Ovary (tissue), 10 donors: ENCODE measurements at regions of chr11 and their contacts with region 1.

Region 1: DNA sequence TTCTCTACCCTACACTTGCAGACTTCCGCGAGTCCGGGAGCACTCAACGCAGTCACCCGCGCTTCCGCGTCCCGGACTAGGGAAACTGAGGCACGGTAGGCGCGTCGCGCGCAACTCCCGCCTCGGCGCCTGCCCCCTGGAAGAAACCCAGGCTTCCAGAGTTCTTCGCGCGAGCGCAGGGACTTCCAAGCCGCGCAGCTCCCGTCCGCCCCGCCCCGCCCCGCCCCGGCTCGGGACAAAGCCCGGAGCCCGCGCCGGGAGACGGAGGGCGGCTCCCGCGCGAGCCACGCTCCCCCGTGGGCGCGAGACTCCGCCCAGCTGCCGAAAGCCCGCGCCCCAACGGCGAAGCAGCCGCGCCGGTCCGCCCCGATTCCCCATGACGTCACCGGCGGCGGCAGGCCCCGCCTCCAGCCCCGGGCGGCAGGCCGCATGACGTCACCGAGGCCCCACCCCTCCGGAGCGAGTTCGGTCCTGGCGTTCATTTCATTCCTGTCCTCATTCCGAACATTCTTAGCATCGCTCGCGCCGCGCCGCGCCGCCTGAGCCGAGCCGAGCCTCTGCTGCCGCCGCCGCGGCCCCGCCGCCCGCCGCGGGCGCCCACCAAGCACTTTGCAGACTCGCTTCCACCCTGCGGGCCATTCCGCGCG is at the start of gene TEAD1:
- DNase-seq: peak; percentile 97 to 100 (median 99)
- H3K4me3 ChIP-seq: peak within 1 kb of the TSS; percentile 52
- H3K27ac ChIP-seq: peak within 1 kb of the TSS; percentile 94 to 99
- H3K4me1 ChIP-seq: peaks cover 2% of the 10 kb centered on the region
- H3K27me3 ChIP-seq: no peaks in the 10 kb centered on the region
- CTCF ChIP-seq: peak in 2 of 3 donors; percentile 25 to 39
- EP300 ChIP-seq: no peak
- POLR2A ChIP-seq: peak; percentile 67
- total RNA-seq, gene TEAD1: 59.2 to 84.1 (median 73.9) TPM

Region 2: GRCh38 chr11:12319988-12320387 is 354.1 kb before region 1 on chr11:
- intact Hi-C with region 1: loop called in 1 of 4 experiments (anchors 10 kb)
- DNase-seq: no peak
- H3K4me3 ChIP-seq: no peak overlapping the region
- H3K27ac ChIP-seq: no peak overlapping the region
- H3K4me1 ChIP-seq: peaks cover 4% of the 10 kb centered on the region
- H3K27me3 ChIP-seq: peaks cover 2% of the 10 kb centered on the region
- CTCF ChIP-seq: no peak
- EP300 ChIP-seq: no peak
- POLR2A ChIP-seq: no peak

Region 3: GRCh38 chr11:12411806-12412727 is 262.0 kb before region 1 on chr11:
- intact Hi-C with region 1: loop called in 1 of 4 experiments (anchors 10 kb)
- DNase-seq: peak; percentile 70 to 80 (median 71)
- H3K4me3 ChIP-seq: no peak overlapping the region
- H3K27ac ChIP-seq: peak overlapping the region in 1 of 2 donors; percentile 57
- H3K4me1 ChIP-seq: peaks cover 28% of the 10 kb centered on the region
- H3K27me3 ChIP-seq: no peaks in the 10 kb centered on the region
- CTCF ChIP-seq: peak; percentile 37 to 76 (median 63)
- EP300 ChIP-seq: no peak
- POLR2A ChIP-seq: no peak

Region 4: GRCh38 chr11:12618743-12619540 is 55.1 kb before region 1 on chr11:
- intact Hi-C with region 1: no loop called
- DNase-seq: no peak
- H3K4me3 ChIP-seq: no peak overlapping the region
- H3K27ac ChIP-seq: no peak overlapping the region
- H3K4me1 ChIP-seq: no peaks in the 10 kb centered on the region
- H3K27me3 ChIP-seq: no peaks in the 10 kb centered on the region
- CTCF ChIP-seq: no peak
- EP300 ChIP-seq: no peak
- POLR2A ChIP-seq: no peak

Region 5: DNA sequence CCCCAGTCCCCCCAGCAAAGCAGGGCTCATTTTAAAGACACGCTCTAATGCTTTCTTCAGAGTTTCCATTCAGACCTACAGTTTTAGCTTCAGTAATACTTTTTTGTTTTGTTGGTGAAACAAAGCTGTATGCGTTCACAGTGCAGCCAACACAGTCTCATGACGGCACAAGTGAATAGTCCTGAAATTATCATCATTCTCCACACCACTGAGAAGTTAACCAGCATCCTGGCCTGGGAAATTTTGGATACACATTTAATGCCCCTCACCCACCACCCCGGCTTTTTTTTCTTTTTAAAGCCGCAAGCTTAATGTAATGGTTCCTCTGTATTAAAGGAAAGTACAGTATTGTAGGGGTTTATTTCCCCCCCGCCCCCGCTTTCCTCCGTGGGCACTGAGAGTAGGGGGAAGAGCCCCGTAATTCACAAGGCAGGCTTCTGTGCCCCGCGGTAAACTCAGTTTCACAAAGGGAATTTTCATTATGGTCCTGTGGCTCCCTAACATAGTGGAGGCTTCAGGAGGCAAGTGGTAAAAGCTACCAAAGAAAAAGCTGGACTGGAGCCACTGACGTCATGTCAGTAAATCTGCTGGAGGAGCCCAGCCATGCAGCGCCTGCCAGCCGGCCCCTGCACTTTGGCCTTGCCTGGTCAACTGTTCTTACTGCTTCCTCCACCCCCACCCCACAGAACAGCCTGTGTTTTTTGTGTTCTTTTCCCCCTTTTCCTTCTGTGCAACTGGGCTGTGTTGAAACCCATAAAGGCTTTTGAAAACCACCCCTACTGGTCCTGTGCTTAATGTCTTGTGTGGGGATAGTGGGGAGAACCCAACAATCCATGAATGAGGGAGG is 18.4 kb after region 1 on chr11:
- intact Hi-C with region 1: loop called in 1 of 4 experiments (anchors 1 kb)
- DNase-seq: peak; percentile 93 to 97 (median 96)
- H3K4me3 ChIP-seq: no peak overlapping the region
- H3K27ac ChIP-seq: peak overlapping the region; percentile 66 to 87
- H3K4me1 ChIP-seq: peaks cover 32% of the 10 kb centered on the region
- H3K27me3 ChIP-seq: no peaks in the 10 kb centered on the region
- CTCF ChIP-seq: peak in 1 of 3 donors; percentile 5
- EP300 ChIP-seq: no peak
- POLR2A ChIP-seq: no peak

Region 6: GRCh38 chr11:12813371-12814225 is 139.6 kb after region 1 on chr11:
- intact Hi-C with region 1: loop called in 3 of 4 experiments (anchors 10 kb)
- DNase-seq: peak; percentile 74 to 84 (median 76)
- H3K4me3 ChIP-seq: no peak overlapping the region
- H3K27ac ChIP-seq: peak overlapping the region; percentile 80 to 83
- H3K4me1 ChIP-seq: peaks cover 30% of the 10 kb centered on the region
- H3K27me3 ChIP-seq: no peaks in the 10 kb centered on the region
- CTCF ChIP-seq: peak in 1 of 3 donors; percentile 8
- EP300 ChIP-seq: no peak
- POLR2A ChIP-seq: no peak

Region 7: DNA sequence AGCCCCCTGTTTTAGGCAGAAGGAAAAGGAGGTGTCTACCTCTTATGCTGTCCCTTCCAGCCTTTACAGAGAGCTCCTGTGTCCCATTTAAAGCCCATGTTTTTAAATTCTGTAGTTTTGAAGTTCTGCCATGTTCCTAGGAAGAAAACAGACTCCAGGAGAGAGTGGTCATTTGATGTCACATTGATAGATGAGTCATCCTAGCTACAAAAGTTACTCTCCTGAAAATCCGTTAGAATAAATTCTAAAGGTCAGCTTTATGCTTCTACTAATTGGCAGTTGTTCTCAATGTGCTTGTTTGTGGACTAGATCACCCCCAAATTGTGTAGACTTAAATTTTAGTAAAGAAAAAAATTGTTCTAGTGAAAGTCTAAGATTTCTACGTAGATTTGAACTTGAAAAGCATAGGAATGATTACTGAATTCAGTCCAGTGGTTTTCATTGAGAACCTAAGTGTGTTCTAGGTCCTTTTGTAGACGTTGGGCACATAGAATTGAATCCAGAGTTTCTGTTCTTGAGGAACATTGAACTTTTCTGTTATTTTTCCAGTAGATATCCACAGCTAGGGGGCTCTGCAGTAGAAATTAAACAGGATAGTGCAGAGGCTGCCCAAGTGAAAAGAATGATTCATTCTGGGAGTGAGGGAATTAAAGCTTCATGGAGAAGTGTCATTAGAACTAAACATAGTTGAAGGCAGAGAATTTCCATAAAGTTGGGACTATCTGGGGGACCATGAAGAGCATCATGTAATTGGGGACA is 194.4 kb after region 1 on chr11:
- intact Hi-C with region 1: no loop called
- DNase-seq: no peak
- H3K4me3 ChIP-seq: no peak overlapping the region
- H3K27ac ChIP-seq: no peak overlapping the region
- H3K4me1 ChIP-seq: peaks cover 12% of the 10 kb centered on the region
- H3K27me3 ChIP-seq: no peaks in the 10 kb centered on the region
- CTCF ChIP-seq: peak in 1 of 3 donors; percentile 26
- EP300 ChIP-seq: no peak
- POLR2A ChIP-seq: no peak

Region 8: DNA sequence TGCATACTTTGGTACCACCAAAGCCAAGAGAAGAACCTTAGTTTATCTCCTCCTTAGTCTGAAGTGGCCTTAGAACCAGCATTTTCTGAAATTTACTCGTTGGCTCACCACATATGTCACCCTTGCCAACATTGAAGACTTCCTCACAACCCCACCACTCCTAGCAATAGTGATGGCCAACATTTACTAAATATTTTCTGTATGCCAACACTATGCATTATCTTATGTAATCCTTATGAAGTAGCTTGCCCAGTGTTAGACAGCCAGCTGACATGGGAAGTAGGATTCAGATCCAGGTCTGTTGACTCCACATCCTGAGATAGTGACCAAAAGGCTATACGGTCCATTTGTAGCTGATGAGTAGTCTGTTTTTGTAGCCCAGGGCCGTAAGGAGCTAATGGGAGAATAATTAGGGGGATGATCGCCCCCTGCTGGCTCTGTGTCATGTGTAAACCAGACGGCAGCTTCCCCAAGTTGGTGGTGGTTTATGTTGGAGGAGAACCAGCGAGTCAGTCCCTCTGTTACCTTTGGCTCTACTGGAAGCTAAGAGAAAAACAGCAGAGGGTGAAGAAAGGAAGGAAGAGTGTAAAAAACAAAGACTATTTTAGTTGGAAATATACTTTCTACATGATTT is 214.6 kb after region 1 on chr11:
- intact Hi-C with region 1: loop called in 3 of 4 experiments (anchors 5 to 10 kb)
- DNase-seq: peak; percentile 90 to 95 (median 93)
- H3K4me3 ChIP-seq: no peak overlapping the region
- H3K27ac ChIP-seq: peak overlapping the region in 1 of 2 donors; percentile 73
- H3K4me1 ChIP-seq: peaks cover 9% of the 10 kb centered on the region
- H3K27me3 ChIP-seq: no peaks in the 10 kb centered on the region
- CTCF ChIP-seq: peak; percentile 53 to 81 (median 79)
- EP300 ChIP-seq: no peak
- POLR2A ChIP-seq: no peak

Region 9: DNA sequence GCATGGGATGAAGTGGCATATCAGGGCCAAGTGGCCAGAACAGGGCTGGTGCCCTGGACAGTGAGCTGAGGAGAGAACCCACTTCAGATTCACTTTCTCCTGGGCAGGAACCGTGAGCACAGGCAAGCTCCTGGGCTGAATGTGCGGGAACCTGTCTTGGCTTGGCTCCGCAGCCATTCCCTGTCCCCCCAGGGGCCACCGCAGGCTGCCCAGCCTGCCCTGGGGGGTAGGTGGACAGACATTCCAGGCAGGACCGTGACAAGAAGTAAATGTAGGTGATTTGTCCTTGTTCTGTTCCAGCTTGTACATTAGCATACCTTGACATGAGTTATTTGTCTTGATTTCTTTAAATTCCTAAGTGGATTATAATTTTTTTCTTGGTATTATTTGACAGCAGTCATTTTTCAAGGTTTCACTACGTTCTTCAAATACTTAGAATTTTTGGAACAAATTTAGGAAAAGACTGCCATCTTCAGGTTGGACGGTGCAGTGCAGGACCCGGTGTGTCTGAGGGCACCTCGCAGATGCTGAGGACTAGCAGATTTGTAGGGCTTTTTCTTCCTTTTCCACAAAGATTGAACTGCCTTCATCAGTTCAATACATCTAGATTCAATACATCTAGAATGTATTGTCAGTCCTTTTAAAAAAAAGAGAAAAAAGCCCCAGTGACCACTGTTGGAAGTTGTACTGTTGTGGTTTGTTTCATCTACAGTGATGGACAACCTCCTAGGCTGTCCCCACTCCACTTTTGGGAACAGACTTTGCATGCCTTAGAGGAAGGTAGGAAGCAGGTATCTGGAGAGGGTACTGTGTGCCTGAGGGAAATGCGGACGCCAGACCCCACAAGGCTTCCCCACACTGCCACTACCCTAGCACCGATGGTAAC is 220.0 kb after region 1 on chr11:
- intact Hi-C with region 1: loop called in 3 of 4 experiments (anchors 5 to 10 kb)
- DNase-seq: peak; percentile 42 to 80 (median 74)
- H3K4me3 ChIP-seq: no peak overlapping the region
- H3K27ac ChIP-seq: no peak overlapping the region
- H3K4me1 ChIP-seq: peaks cover 11% of the 10 kb centered on the region
- H3K27me3 ChIP-seq: no peaks in the 10 kb centered on the region
- CTCF ChIP-seq: peak; percentile 63 to 85 (median 81)
- EP300 ChIP-seq: no peak
- POLR2A ChIP-seq: no peak